Thyroid gland (tissue), 4 donors: ENCODE measurements at regions of chr22 and their contacts with region 1.

Region 1: DNA sequence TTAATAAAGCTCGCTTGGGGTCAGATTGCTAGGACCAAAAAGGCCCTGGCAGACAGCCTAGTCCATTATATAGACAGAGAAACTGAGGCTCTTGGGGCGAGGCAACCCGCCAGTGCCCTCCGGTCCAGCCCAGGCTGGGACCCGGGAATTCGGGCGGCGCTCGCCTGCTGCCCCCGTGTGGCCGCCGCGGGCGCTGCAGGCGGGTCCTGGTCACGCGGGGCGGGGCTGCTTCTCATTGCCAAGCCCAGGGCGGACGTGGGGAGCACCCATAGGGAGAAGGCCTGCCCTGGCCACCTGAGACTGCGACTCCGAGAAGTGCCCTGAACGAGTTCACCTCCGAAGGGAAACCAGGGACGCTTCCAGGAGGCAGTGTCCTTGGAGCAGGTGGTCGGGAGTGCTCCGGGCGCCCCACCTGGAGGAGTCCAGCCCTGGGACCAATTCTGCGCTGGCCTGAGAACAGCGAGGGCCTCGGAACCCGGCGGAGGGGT is 36.0 kb upstream of the CSNK1E start:
- DNase-seq: peak; percentile 68 to 70
- H3K4me3 ChIP-seq: no peak overlapping the region
- H3K27ac ChIP-seq: peak overlapping the region in 1 of 3 donors; percentile 1
- H3K4me1 ChIP-seq: peaks cover 5 to 7% of the 10 kb centered on the region in 2 donors
- H3K27me3 ChIP-seq: no peaks in the 10 kb centered on the region
- CTCF ChIP-seq: peak; percentile 72 to 99 (median 96)
- POLR2A ChIP-seq: no peak

Region 2: GRCh38 chr22:38051900-38052862 is 301.0 kb before region 1 on chr22:
- intact Hi-C with region 1: loop called (anchors 2 kb)
- DNase-seq: peak; percentile 83 to 84
- H3K4me3 ChIP-seq: no peak overlapping the region
- H3K27ac ChIP-seq: no peak overlapping the region
- H3K4me1 ChIP-seq: no peaks in the 10 kb centered on the region
- H3K27me3 ChIP-seq: no peaks in the 10 kb centered on the region
- CTCF ChIP-seq: peak; percentile 70 to 96 (median 88)
- POLR2A ChIP-seq: no peak

Region 3: GRCh38 chr22:38114484-38115398 is 238.4 kb before region 1 on chr22:
- intact Hi-C with region 1: loop called (anchors 5 kb)
- DNase-seq: peak; percentile 81 to 83
- H3K4me3 ChIP-seq: no peak overlapping the region
- H3K27ac ChIP-seq: no peak overlapping the region
- H3K4me1 ChIP-seq: no peaks in the 10 kb centered on the region
- H3K27me3 ChIP-seq: no peaks in the 10 kb centered on the region
- CTCF ChIP-seq: peak; percentile 72 to 95 (median 84)
- POLR2A ChIP-seq: no peak

Region 4: GRCh38 chr22:38398609-38399461 is 45.6 kb after region 1 on chr22:
- intact Hi-C with region 1: no loop called
- DNase-seq: peak; percentile 76 to 84
- H3K4me3 ChIP-seq: peak overlapping the region; percentile 39 to 76 (median 45)
- H3K27ac ChIP-seq: peak overlapping the region; percentile 88 to 93 (median 93)
- H3K4me1 ChIP-seq: peaks cover 7 to 18% of the 10 kb centered on the region in 2 donors
- H3K27me3 ChIP-seq: no peaks in the 10 kb centered on the region
- CTCF ChIP-seq: no peak
- POLR2A ChIP-seq: peak; percentile 76 to 84